PC-9 (cell line): ENCODE measurements at regions of chr17 and their contacts with region 1.

Region 1: DNA sequence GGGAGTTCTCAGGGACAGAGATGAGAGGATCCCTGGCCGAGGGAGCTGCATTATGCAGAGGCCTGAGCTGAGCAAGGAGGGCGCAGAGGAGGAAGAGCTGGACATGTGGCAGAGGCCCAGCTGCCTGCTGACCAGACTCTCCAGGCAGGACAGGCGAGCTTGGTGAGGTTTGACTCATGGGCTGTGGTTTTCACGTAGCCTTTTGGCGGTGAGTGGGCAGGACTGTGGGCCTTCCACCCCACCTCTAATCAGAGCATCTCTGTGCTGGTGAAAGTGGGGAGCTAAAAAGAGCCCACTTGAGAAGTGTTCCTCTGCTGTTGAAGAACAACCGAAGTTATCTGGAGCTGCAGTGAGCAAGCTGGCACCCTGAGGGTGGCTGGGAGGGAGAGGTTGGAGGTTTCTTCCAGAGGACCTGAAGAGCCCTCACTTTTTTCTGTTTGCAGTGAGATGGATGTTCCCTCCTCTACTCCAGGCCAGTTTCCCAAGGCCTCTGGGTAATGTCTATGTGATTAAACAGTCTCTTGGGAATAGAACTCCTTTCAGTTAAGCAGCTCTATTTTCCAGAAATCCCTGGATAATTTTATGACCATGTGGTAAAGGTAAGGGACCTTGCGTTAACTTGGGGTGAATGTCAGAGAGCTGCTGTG is 11.9 kb downstream of the EPN2 start:
- DNase-seq: peak; percentile 79 to 82
- H3K4me3 ChIP-seq: no peak overlapping the region; the same call in 1 of the 2 replicates
- H3K27ac ChIP-seq: peak overlapping the region; percentile 54
- H3K4me1 ChIP-seq: peaks cover 38% of the 10 kb centered on the region
- H3K27me3 ChIP-seq: no peaks in the 10 kb centered on the region
- CTCF ChIP-seq: no peak

Region 2: GRCh38 chr17:17978481-17979424 is 1270.3 kb before region 1 on chr17:
- CTCF ChIA-PET with region 1: no interaction called
- POLR2A ChIA-PET with region 1: no interaction called
- intact Hi-C with region 1: no loop called
- DNase-seq: no peak
- H3K4me3 ChIP-seq: no peak overlapping the region
- H3K27ac ChIP-seq: no peak overlapping the region
- H3K4me1 ChIP-seq: peaks cover 2% of the 10 kb centered on the region
- H3K27me3 ChIP-seq: no peaks in the 10 kb centered on the region
- CTCF ChIP-seq: no peak

Region 3: DNA sequence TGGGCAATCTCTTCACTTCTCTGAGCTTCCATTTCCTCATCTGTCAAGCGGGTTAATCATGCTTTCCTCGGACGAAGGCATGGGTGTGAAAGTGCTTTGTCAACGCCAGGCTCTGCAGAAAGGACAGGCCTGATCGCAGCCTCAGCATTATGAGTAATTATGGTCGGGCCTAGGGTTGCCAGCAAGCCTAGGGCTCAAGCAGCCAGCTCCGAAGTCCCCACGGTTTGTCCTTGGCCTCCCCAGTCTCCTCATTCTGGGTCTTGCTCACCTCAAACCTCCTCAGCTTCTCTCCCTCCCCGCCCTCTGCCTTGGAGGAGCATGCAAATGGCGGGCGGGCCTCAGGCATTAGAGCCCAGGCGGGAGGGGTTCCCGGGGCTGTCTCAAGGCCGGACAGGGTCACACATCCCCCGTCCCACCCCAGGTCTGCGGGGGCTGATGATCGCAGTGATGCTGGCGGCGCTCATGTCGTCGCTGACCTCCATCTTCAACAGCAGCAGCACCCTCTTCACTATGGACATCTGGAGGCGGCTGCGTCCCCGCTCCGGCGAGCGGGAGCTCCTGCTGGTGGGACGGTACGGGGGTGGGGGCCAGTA is 234.3 kb before region 1 on chr17:
- CTCF ChIA-PET with region 1: no interaction called
- POLR2A ChIA-PET with region 1: interaction called, 11 read pairs
- intact Hi-C with region 1: no loop called
- DNase-seq: no peak
- H3K4me3 ChIP-seq: no peak overlapping the region
- H3K27ac ChIP-seq: no peak overlapping the region
- H3K4me1 ChIP-seq: peaks cover 15% of the 10 kb centered on the region
- H3K27me3 ChIP-seq: peaks cover 3% of the 10 kb centered on the region; the same call in 1 of the 2 replicates
- CTCF ChIP-seq: no peak

Region 4: DNA sequence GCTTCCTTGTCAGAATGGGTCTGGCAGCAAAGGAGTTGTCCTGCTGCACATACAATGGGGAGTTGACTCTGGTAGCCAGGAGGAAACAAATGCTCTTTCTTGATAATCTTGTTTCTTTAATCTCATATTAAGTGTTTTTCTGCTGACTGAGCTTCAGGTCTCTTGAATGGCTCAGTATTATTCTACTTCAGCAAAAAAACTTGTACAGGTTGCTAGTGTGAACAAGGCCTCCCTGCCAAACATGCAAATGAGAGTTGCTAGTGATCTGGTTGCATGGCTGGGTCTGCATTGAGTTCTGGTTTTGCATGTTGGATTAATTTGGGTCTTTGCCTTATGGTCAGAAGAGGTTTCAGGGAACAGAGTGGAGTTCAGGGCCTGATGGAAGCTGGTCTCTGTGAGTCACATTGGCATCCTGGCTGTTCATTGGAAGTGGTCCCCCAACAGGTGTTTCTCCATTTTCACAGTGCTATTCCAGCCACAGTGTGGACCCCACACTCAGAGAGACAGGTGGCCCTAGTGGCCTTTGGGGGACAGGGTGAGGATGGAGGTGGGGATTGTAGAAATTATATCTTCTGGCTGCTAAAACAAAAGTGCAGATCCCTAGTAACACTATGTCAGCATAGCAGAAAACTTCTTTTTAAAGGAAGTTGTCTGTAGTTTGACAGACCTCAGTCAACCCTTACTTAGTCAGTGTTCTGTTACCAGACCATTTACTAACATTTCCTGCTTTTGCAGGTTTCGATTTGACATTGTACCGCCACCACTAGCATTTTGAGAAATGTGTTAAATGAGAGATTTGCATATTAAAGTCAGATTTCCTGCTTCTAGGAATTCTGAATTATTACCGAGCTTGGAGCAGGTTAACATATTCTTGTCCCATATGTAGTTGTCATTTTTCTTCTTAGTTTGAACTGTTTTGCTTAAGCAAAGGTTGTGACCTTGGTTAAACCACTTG is 35.2 kb after region 1 on chr17:
- CTCF ChIA-PET with region 1: no interaction called
- POLR2A ChIA-PET with region 1: no interaction called
- intact Hi-C with region 1: no loop called
- DNase-seq: peak in 1 of 2 experiments; percentile 34
- H3K4me3 ChIP-seq: no peak overlapping the region
- H3K27ac ChIP-seq: no peak overlapping the region
- H3K4me1 ChIP-seq: no peaks in the 10 kb centered on the region
- H3K27me3 ChIP-seq: no peaks in the 10 kb centered on the region
- CTCF ChIP-seq: no peak

Region 5: DNA sequence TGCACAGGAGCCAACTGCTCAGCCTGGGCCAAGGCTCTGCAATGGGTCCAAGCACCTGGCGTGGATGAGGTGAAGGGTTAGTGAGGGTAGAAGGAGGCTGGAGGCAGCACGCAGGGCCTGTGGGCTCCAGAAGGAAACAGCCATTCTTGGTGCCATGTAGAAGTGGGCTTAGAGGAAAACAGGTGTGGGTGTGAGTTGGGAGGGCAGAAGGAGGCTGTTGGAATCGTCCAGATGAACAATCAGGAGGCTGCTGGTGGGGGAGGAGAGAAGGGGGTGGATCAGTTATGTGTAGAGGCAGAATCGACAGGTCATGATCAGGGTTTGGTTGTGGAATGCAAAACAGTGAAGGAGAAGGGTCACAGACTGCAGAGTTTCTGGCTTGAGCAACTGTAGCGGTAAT is 347.8 kb after region 1 on chr17:
- CTCF ChIA-PET with region 1: no interaction called
- POLR2A ChIA-PET with region 1: no interaction called
- intact Hi-C with region 1: no loop called
- DNase-seq: no peak
- H3K4me3 ChIP-seq: no peak overlapping the region
- H3K27ac ChIP-seq: no peak overlapping the region
- H3K4me1 ChIP-seq: no peaks in the 10 kb centered on the region
- H3K27me3 ChIP-seq: no peaks in the 10 kb centered on the region
- CTCF ChIP-seq: no peak